PC-9 (cell line): ENCODE measurements at regions of chr13 and their contacts with region 1.

Region 1: DNA sequence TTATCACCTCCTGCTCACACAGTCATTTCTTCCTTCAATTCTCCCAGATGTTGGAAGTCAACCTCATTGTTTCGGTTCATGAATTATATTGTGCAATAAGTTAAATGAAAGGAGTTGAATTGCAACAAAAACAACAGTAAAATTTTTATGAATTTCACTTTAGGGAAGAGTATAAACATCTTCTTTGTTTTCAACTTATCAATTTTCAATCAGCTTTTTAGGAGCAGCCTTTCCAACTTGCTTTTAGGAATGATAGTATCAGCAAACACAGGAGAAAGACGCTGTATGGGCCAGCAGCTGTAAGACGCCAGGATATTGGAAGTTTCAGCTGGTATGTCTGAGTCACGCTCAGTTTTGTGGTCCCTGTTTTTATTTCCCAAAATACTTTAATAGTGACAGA is 132.5 kb upstream of the ARGLU1 start:
- DNase-seq: no peak
- H3K4me3 ChIP-seq: no peak overlapping the region
- H3K27ac ChIP-seq: no peak overlapping the region
- H3K4me1 ChIP-seq: no peaks in the 10 kb centered on the region
- H3K27me3 ChIP-seq: no peaks in the 10 kb centered on the region
- CTCF ChIP-seq: no peak

Region 2: DNA sequence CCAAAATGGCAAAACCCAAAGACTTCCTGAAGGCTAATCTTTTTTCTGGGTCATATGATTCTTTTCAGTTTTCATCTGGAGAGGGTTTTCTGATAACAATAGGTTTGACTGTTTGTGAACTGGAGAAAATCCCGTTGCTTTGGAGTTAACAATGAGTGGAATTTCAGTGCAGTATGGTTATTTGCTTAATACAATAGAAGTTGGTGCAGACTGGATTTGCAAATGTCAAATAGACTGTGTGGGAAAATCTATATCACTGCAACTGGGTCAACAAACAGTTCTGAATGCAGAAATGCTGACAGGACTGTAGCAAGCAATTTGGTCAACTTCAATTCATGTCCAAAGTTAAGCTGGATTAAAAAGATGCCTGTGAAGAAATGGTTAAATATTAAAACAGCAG is 135.0 kb after region 1 on chr13:
- CTCF ChIA-PET with region 1: no interaction called
- POLR2A ChIA-PET with region 1: no interaction called
- intact Hi-C with region 1: no loop called
- DNase-seq: no peak
- H3K4me3 ChIP-seq: no peak overlapping the region
- H3K27ac ChIP-seq: no peak overlapping the region
- H3K4me1 ChIP-seq: no peaks in the 10 kb centered on the region
- H3K27me3 ChIP-seq: no peaks in the 10 kb centered on the region
- CTCF ChIP-seq: no peak

Region 3: DNA sequence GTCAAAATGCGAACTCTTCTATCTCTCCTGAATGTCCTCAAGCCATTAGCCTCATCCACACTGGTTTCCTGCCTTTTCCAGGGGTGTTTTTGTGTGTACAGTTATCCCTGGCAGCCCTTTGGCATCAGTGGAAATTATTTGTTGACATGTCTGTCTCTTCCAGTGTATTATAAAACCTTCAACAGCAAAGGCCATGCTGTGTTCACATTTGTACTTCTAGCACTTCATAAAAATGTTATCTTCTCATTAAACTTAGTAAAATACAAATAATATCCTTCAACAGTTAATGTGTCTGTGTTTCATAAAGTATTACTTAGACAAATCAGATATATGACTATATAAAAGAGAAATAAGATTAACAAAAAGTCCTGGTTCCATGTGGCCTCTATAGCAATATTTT is 227.0 kb after region 1 on chr13:
- CTCF ChIA-PET with region 1: no interaction called
- POLR2A ChIA-PET with region 1: no interaction called
- intact Hi-C with region 1: no loop called
- DNase-seq: no peak
- H3K4me3 ChIP-seq: no peak overlapping the region
- H3K27ac ChIP-seq: no peak overlapping the region
- H3K4me1 ChIP-seq: no peaks in the 10 kb centered on the region; the same call in 1 of the 2 replicates
- H3K27me3 ChIP-seq: no peaks in the 10 kb centered on the region
- CTCF ChIP-seq: no peak

Region 4: DNA sequence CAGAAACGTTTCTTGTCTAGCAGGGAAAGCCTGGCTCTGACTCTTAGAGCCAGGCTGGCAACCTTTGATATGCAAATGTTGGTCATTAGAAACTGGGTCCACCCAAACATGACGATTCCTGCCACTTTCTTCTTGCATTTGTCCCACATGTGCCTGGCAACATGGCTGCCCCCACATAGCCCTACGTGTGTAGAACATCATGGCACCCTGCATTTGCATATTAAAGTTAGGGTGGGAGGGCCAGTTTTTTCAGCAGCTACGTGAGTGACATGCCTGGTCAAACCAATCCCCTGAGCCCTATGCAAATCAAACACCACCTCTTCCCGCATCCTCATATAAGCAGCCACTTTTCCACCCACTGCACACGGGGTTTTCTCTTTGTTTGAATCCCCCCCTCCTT is 1419.9 kb after region 1 on chr13:
- CTCF ChIA-PET with region 1: no interaction called
- POLR2A ChIA-PET with region 1: interaction called, 21 read pairs
- intact Hi-C with region 1: no loop called
- DNase-seq: no peak
- H3K4me3 ChIP-seq: peak overlapping the region; percentile 31; the same call in 1 of the 2 replicates
- H3K27ac ChIP-seq: no peak overlapping the region
- H3K4me1 ChIP-seq: no peaks in the 10 kb centered on the region
- H3K27me3 ChIP-seq: no peaks in the 10 kb centered on the region
- CTCF ChIP-seq: no peak